Right ventricle myocardium superior (tissue), 1 donor: ENCODE measurements at regions of chr14 and their contacts with region 1.

Region 1: GRCh38 chr14:62126879-62127478 is 364.8 kb downstream of the SNAPC1 start:
- DNase-seq: no peak
- ATAC-seq: peak; percentile 80

Region 2: GRCh38 chr14:61296719-61297502 is 830.1 kb before region 1 on chr14:
- intact Hi-C with region 1: loop called (anchors 10 kb)
- DNase-seq: no peak
- ATAC-seq: peak; percentile 56

Region 3: GRCh38 chr14:61444215-61444768 is 682.7 kb before region 1 on chr14:
- intact Hi-C with region 1: loop called (anchors 10 kb)
- DNase-seq: no peak
- ATAC-seq: no peak

Region 4: DNA sequence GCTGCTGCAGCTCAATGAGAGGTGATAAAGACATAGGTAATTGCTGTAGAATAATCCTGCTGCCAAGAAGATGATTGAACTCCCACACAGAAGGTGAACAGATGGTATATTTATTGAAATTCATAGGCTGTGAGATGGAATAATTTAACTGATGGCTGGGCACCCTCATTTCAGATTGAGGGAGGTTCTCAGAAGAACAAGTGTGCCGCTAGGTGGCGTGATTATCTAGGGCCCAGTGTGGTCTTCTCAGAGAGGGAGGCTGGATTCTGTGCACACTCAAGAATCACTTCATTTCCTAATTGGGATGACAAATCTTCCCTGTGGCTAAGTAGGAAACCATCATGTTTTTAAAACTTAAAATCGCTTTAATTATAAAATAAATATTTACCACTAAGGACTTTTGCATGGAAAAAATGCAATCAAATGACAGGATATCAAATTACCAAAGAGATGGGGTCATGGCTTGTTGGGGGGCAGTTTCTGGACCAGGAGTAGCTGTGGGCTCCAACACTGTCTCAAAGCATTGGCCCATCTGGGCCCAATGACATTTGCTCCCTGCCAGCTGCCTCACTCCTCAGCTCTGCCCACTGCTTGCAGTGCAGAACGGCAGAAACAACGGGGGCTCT is 232.4 kb before region 1 on chr14:
- intact Hi-C with region 1: loop called (anchors 10 kb)
- DNase-seq: peak; percentile 56
- ATAC-seq: peak; percentile 69

Region 5: GRCh38 chr14:62308891-62309290 is 181.9 kb after region 1 on chr14:
- intact Hi-C with region 1: no loop called
- DNase-seq: no peak
- ATAC-seq: no peak